ENCODE measurements at regions of chr2 and their contacts with region 1.

Region 1: DNA sequence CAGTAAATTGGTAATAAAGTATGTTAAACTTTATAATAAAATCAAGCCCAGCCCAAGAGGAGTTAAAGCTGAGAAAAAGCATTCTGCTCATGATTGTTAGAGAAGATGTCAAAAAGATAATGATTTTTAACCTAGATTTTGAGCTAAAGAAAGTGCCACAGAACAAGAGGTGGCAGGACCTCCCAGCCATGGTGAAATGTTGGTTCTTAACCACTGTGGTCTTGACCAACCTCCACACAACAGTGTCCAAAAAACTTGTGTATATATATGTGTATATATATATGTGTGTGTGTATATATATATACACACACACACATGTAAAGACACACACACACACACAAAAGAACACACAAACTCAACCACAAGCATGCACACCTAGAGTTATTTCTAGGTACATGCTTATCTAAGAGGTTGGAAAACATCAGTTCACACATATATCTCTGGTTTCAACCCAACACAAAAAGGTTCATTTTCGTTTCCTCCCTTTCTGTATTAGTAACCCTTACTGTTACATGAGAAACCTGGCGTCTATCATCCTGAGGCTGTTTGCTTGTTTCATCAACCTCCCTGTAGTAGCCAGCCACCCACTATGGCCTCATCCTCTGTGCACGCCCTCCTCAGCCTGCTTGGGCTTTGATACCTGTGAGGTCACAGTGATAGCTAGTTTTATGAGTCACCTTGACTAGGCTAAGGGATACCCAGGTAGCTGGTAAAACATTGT is 631.8 kb upstream of the ID2 start:
- DNase-seq: peak; percentile 52
- H3K4me3 Mint-ChIP-seq: peak overlapping the region; percentile 43
- H3K27ac Mint-ChIP-seq: peak overlapping the region; percentile 93
- H3K4me1 Mint-ChIP-seq: peaks cover 48% of the 10 kb centered on the region
- H3K27me3 Mint-ChIP-seq: no peaks in the 10 kb centered on the region

Region 2: DNA sequence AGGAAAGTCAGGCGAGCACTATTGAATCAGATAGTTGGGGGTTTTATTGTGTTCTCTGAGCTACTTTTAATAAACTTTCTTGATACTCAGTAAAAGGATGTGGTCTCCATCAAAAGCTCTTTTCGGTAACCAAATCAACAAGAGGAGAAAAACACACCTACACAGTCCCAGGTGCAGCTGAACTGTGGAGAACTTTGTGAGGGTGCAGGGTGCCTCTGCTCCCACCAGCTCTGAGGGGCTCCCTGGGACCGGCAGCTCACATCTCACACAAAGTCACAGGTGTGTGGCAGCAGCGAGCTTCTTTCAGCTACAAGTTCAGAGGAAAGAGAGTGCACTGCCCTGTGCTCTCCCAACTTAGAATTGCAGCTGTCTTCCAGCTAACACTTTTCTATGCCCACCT is 482.4 kb before region 1 on chr2:
- intact Hi-C with region 1: loop called (anchors 5 kb)
- DNase-seq: peak; percentile 47
- H3K4me3 Mint-ChIP-seq: peak overlapping the region; percentile 25
- H3K27ac Mint-ChIP-seq: peak overlapping the region; percentile 90
- H3K4me1 Mint-ChIP-seq: peaks cover 59% of the 10 kb centered on the region
- H3K27me3 Mint-ChIP-seq: no peaks in the 10 kb centered on the region

Region 3: DNA sequence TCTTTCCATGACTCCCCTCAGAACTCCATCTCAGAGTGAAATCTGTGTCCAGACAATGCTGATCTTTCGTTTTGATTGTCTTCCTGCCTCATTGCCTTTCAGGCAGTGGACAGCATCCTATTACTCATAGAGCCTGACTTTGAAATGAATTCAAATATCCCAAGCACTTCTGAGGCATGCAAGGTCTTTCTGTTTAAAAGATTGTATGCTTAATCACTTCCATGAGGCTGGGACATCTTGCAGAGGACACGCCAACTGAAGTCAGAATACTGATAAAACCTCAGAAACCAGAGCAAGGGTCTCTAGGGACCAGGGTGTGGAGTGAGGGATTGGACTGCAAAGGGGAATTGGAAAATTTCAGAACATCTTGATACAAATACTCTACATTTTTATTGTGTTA is 204.7 kb before region 1 on chr2:
- intact Hi-C with region 1: loop called (anchors 1 kb)
- DNase-seq: no peak
- H3K4me3 Mint-ChIP-seq: no peak overlapping the region
- H3K27ac Mint-ChIP-seq: no peak overlapping the region
- H3K4me1 Mint-ChIP-seq: peaks cover 57% of the 10 kb centered on the region
- H3K27me3 Mint-ChIP-seq: no peaks in the 10 kb centered on the region

Region 4: GRCh38 chr2:7984693-7985353 is 65.2 kb before region 1 on chr2:
- intact Hi-C with region 1: loop called (anchors 1 kb)
- DNase-seq: no peak
- H3K4me3 Mint-ChIP-seq: peak overlapping the region; percentile 12
- H3K27ac Mint-ChIP-seq: peak overlapping the region; percentile 82
- H3K4me1 Mint-ChIP-seq: peaks cover 28% of the 10 kb centered on the region
- H3K27me3 Mint-ChIP-seq: no peaks in the 10 kb centered on the region

Region 5: GRCh38 chr2:8090748-8091700 is 41.0 kb after region 1 on chr2:
- intact Hi-C with region 1: loop called (anchors 1 kb)
- DNase-seq: peak; percentile 22
- H3K4me3 Mint-ChIP-seq: no peak overlapping the region
- H3K27ac Mint-ChIP-seq: no peak overlapping the region
- H3K4me1 Mint-ChIP-seq: peaks cover under 1% of the 10 kb centered on the region
- H3K27me3 Mint-ChIP-seq: no peaks in the 10 kb centered on the region

Region 6: GRCh38 chr2:8628230-8629209 is 578.5 kb after region 1 on chr2:
- intact Hi-C with region 1: no loop called
- DNase-seq: no peak
- H3K4me3 Mint-ChIP-seq: no peak overlapping the region
- H3K27ac Mint-ChIP-seq: no peak overlapping the region
- H3K4me1 Mint-ChIP-seq: peaks cover 8% of the 10 kb centered on the region
- H3K27me3 Mint-ChIP-seq: peaks cover 3% of the 10 kb centered on the region

Measured in activated T-helper 1 cell treated with anti-CD3 and anti-CD28 coated beads, Interleukin-12 subunit alpha, Interleukin-12 subunit beta, Interleukin-2, Interleukin-4 antibody, amounts not matched to agents 30 ng/mL and 10 ng/mL and 1 ng/mL, durations not matched to agents 14 hours and 24 hours and 36 hours (primary cell).